A673 (cell line): ENCODE measurements at regions of chr6 and their contacts with region 1.

Region 1: GRCh38 chr6:125956506-125957390 is at the start of gene HINT3:
- DNase-seq: peak; percentile 99
- H3K4me3 ChIP-seq: peak within 1 kb of the TSS; percentile 74
- H3K27ac ChIP-seq: peak within 1 kb of the TSS; percentile 89
- H3K4me1 ChIP-seq: peaks cover 13% of the 10 kb centered on the region
- H3K27me3 ChIP-seq: no peaks in the 10 kb centered on the region
- CTCF ChIP-seq: peak; percentile 99
- total RNA-seq, gene HINT3: 15.0 and 15.8 TPM in 2 replicates

Region 2: DNA sequence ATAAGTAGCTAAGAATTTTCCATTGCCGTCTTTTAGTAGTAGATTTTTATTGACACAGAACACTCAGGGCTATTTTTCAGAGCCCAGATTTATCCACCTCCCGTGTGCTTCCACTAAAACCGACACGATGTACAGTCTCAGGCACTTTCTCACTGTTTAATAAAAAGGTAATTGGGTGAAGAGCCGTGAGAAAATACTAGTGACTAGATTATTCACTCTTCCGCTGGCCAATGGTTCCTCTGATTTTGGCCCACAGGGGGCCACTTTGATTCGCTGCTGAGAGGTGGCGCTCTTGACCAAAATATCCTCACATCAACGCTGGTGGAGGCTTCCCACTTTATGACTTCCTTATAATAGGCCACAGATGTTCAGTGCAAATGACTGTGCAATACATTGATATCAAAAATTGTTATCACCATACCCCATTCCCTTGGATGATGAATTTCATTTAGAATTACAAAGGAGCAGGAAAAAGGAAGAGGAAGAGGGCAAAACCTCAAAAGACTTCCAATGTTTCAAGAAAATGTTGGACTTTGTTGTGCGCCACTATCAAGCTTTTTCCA is 642.6 kb before region 1 on chr6:
- CTCF ChIA-PET with region 1: no interaction called
- POLR2A ChIA-PET with region 1: no interaction called
- intact Hi-C with region 1: loop called (anchors 2 kb)
- DNase-seq: peak; percentile 82
- H3K4me3 ChIP-seq: no peak overlapping the region
- H3K27ac ChIP-seq: no peak overlapping the region
- H3K4me1 ChIP-seq: no peaks in the 10 kb centered on the region
- H3K27me3 ChIP-seq: no peaks in the 10 kb centered on the region
- CTCF ChIP-seq: peak; percentile 93

Region 3: GRCh38 chr6:125779924-125780539 is 176.7 kb before region 1 on chr6:
- CTCF ChIA-PET with region 1: interaction called, 7 read pairs
- POLR2A ChIA-PET with region 1: no interaction called
- intact Hi-C with region 1: loop called (anchors 1 kb)
- DNase-seq: peak; percentile 96
- H3K4me3 ChIP-seq: peak overlapping the region; percentile 54
- H3K27ac ChIP-seq: peak overlapping the region; percentile 82
- H3K4me1 ChIP-seq: peaks cover 17% of the 10 kb centered on the region
- H3K27me3 ChIP-seq: no peaks in the 10 kb centered on the region
- CTCF ChIP-seq: no peak

Region 4: DNA sequence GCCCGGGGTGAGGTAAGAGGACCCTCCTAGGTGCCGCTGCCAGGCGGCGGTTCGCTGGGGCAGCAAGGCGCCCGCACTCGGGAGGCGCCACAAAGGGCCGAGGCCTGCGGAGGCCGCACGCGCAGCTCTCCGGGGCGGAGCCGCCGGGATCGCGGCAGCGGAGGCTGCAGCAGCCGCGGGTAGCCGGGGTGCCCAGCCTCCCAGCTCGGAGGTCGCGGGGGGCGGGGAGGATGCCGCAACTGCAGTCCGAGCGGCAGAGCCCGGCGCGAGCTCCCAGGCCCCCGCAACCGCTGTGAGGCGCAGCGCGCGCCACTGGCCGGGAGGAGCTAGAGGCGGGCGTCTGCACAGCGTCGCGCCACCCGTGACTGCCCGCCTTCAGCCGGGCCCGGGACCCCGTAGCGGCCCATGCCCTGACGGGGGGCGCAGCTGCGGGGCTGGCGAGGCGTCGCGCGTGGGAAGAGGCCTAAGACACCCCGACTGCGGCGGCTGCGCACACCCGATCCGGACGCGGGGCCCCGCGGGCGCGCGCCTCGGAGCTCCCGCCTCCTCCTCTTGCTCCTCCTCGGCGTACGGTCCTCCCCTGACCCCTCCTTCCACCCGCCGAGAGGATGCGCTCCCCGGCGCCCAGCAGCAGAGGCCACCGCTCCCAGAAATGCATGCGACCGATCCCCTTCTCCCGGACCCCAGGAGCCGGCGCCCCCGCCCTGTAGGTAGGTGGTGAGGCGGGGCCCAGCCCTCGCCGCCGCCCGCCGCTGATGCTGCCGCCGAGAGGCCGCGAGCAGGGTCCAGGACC is 166.2 kb before region 1 on chr6 and contains the start of gene NCOA7:
- CTCF ChIA-PET with region 1: interaction called, 16 read pairs
- POLR2A ChIA-PET with region 1: no interaction called
- intact Hi-C with region 1: loop called (anchors 2 kb)
- DNase-seq: peak; percentile 80
- H3K4me3 ChIP-seq: peak within 1 kb of the TSS; percentile 95
- H3K27ac ChIP-seq: peak within 1 kb of the TSS; percentile 97
- H3K4me1 ChIP-seq: peaks cover 60% of the 10 kb centered on the region
- H3K27me3 ChIP-seq: no peaks in the 10 kb centered on the region
- CTCF ChIP-seq: no peak
- total RNA-seq, gene NCOA7: 30.1 and 33.5 TPM in 2 replicates

Region 5: DNA sequence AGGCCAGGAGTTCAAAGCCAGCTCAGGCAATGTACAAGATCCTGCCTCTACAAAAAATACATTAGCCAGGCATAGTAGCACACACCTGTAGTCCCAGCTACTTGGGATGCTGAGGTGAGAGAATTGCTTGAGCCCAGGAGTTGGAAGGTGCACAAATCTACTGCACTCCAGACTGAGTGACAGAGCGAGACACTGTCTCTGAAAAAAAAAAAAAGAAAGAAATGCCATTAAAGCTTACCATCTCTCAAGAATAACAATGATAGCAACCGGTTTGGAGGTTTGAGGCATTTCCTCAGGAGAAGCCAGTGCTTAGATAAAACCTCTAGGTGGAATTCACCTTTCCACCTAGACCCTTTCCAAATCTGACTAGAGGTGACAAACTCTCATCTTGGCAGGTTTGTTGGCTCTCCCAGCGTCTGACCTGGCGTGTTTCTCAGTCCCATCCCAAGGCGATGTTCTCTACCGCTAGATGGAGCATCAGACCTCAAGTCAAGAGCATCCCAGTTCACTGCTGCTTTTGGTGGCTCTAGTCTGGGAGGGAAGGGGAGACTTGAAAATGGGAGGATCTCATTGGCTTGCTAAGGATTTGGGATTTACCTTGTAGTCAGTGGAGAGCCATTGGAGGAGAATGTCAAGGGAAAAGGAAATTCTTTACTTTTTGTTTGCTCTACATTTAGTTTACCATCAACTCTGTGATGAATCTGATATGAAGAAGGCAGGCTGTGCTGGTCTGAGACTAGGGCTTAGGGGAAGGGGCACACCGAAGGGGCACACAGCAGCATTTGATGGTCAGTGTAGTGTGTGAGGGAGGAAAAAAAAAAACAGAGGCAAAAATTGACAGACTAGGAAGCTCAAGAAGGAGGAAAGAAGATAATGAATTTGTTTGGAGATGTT is 98.1 kb before region 1 on chr6:
- CTCF ChIA-PET with region 1: interaction called, 5 read pairs
- POLR2A ChIA-PET with region 1: no interaction called
- intact Hi-C with region 1: loop called (anchors 1 kb)
- DNase-seq: peak; percentile 74
- H3K4me3 ChIP-seq: no peak overlapping the region
- H3K27ac ChIP-seq: no peak overlapping the region
- H3K4me1 ChIP-seq: no peaks in the 10 kb centered on the region
- H3K27me3 ChIP-seq: no peaks in the 10 kb centered on the region
- CTCF ChIP-seq: peak; percentile 77

Region 6: GRCh38 chr6:125906158-125906998 is 50.4 kb before region 1 on chr6:
- CTCF ChIA-PET with region 1: no interaction called
- POLR2A ChIA-PET with region 1: interaction called, 3 read pairs
- intact Hi-C with region 1: loop called (anchors 2 kb)
- DNase-seq: peak; percentile 66
- H3K4me3 ChIP-seq: no peak overlapping the region
- H3K27ac ChIP-seq: no peak overlapping the region
- H3K4me1 ChIP-seq: peaks cover 8% of the 10 kb centered on the region
- H3K27me3 ChIP-seq: no peaks in the 10 kb centered on the region
- CTCF ChIP-seq: peak; percentile 91

Region 7: GRCh38 chr6:126054258-126054702 is 97.5 kb after region 1 on chr6:
- CTCF ChIA-PET with region 1: no interaction called
- POLR2A ChIA-PET with region 1: no interaction called
- intact Hi-C with region 1: no loop called
- DNase-seq: no peak
- H3K4me3 ChIP-seq: no peak overlapping the region
- H3K27ac ChIP-seq: no peak overlapping the region
- H3K4me1 ChIP-seq: no peaks in the 10 kb centered on the region
- H3K27me3 ChIP-seq: no peaks in the 10 kb centered on the region
- CTCF ChIP-seq: no peak

Region 8: DNA sequence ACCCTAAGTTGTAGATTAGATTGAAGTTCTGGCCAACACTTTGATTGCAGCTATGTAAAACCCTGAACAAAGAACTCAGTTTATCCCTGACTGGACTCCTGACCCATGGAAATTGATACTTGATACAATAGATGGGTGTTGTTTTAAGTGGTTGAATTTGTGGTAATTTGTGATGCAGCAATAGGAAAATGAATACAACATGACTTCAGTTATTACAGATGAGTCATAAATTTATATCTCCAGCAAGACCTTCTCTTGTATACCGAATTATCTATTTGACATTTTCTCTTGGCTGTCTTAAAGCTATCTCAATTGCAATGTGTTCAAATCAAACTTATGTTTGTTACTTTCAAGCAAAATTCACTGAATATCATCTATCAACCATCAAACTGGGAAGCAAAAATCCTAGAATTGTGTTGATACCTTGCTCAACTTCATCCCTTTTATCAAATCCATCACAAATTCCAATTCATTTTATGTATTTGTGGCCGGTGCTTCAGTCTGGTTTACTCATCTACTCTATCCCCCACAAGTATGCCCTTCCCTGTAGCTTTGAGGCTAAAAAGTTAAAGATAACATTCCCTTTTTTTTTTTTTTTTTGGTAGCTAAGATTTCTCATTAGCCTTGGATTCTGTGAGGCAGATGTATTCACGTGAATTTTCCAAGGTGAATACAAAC is 253.8 kb after region 1 on chr6:
- CTCF ChIA-PET with region 1: no interaction called
- POLR2A ChIA-PET with region 1: no interaction called
- intact Hi-C with region 1: no loop called
- DNase-seq: no peak
- H3K4me3 ChIP-seq: no peak overlapping the region
- H3K27ac ChIP-seq: no peak overlapping the region
- H3K4me1 ChIP-seq: no peaks in the 10 kb centered on the region
- H3K27me3 ChIP-seq: no peaks in the 10 kb centered on the region
- CTCF ChIP-seq: no peak